Activated CD4-positive, alpha-beta memory T cell treated with anti-CD3 and anti-CD28 coated beads for 36 hours (primary cell): ENCODE measurements at regions of chr12 and their contacts with region 1.

Region 1: GRCh38 chr12:62006076-62006732 is 254.0 kb upstream of the USP15 start:
- DNase-seq: peak; percentile 10
- H3K4me3 Mint-ChIP-seq: no peak overlapping the region
- H3K27ac Mint-ChIP-seq: no peak overlapping the region
- H3K4me1 Mint-ChIP-seq: no peaks in the 10 kb centered on the region
- H3K27me3 Mint-ChIP-seq: peaks cover 1% of the 10 kb centered on the region

Region 2: GRCh38 chr12:60684988-60685655 is 1321.1 kb before region 1 on chr12:
- CTCF ChIA-PET with region 1: no interaction called
- POLR2A ChIA-PET with region 1: no interaction called
- intact Hi-C with region 1: loop called (anchors 5 kb)
- DNase-seq: no peak
- H3K4me3 Mint-ChIP-seq: no peak overlapping the region
- H3K27ac Mint-ChIP-seq: no peak overlapping the region
- H3K4me1 Mint-ChIP-seq: no peaks in the 10 kb centered on the region
- H3K27me3 Mint-ChIP-seq: no peaks in the 10 kb centered on the region

Region 3: DNA sequence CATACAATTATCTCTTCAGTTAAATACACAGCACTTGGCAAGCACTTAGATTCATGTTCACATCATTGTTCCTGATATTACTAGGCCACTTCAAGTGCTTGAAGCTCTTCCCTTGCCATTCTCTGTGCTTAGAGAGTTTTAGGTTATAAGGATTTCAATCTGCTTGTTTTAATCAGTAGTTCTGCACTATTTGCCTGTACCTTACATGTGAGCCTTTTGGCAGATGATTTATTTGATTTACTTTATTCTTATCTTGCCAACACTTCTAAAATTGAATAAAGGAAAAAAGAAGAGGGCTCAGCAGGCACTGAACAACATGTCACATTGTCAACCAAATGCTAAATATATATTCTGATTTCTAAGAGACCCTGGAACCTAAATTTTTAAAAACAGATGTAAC is 109.8 kb before region 1 on chr12:
- CTCF ChIA-PET with region 1: no interaction called
- POLR2A ChIA-PET with region 1: no interaction called
- intact Hi-C with region 1: no loop called
- DNase-seq: no peak
- H3K4me3 Mint-ChIP-seq: no peak overlapping the region
- H3K27ac Mint-ChIP-seq: no peak overlapping the region
- H3K4me1 Mint-ChIP-seq: no peaks in the 10 kb centered on the region
- H3K27me3 Mint-ChIP-seq: no peaks in the 10 kb centered on the region